Sciatic nerve (tissue), 2 donors: ENCODE measurements at regions of chr1 and their contacts with region 1.

Region 1: DNA sequence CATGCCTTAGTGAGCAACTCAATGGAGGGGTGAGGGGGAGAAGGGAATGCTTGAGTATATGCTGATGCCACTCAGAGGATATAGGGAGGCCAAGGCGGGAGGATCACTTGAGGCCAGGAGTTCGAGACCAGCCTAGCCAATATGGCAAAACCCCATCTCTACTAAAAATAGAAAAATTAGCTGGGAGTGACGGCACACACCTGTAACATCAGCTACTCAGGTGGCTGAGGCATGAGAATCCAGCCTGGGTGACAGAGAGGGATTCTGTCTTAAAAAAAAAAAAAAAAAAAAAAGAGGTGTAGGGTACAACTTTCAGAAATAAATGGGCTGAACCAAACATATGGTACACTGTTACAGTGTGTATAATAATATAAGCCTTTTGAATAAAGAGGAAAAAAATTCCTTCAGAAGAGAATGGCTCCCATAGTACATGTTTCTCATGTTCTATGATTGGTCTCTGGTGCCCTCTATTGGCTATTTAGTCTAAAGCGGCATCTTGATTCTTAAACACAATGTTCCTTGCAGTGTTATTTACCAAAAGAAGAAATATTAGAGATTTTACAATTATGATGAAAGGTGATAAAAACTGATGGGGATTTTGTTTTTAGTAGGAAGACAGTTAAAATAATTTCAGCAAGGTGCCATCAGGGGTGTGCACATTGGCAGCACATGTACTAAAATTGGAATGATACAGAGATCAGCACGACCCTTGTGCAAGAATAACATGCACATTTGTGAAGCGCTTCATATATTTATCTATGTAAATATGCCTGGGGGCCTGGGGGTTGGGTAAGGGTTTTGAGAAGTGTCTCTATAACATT is 109.8 kb downstream of the PATJ start:
- DNase-seq: no peak
- ATAC-seq: peak; percentile 82

Region 2: GRCh38 chr1:59976194-59977074 is 1875.6 kb before region 1 on chr1:
- intact Hi-C with region 1: loop called (anchors 5 kb)
- DNase-seq: peak; percentile 86
- ATAC-seq: peak; percentile 70